ENCODE measurements at regions of chr14 and their contacts with region 1.

Region 1: DNA sequence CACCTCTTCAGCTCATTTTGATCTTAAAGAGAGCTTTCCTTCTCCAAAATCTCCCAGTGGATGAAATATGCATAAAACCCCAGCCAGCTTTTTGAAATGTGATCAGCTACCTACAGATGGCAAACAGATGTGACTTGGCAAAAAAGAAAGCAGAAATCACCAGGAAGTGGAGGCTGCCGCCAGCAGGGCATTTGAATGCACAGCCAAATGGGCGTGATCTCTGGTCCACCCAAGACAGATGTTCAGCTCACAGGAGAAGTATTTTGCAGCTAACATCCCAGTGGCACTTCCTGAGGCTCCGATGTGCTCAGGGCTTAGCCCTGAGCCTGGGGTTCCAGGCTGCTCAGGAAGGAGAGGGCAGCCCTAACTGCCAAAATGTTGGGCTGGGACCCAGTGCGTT is 78.3 kb downstream of the LGMN start:
- DNase-seq: no peak
- CTCF ChIP-seq: no peak

Region 2: DNA sequence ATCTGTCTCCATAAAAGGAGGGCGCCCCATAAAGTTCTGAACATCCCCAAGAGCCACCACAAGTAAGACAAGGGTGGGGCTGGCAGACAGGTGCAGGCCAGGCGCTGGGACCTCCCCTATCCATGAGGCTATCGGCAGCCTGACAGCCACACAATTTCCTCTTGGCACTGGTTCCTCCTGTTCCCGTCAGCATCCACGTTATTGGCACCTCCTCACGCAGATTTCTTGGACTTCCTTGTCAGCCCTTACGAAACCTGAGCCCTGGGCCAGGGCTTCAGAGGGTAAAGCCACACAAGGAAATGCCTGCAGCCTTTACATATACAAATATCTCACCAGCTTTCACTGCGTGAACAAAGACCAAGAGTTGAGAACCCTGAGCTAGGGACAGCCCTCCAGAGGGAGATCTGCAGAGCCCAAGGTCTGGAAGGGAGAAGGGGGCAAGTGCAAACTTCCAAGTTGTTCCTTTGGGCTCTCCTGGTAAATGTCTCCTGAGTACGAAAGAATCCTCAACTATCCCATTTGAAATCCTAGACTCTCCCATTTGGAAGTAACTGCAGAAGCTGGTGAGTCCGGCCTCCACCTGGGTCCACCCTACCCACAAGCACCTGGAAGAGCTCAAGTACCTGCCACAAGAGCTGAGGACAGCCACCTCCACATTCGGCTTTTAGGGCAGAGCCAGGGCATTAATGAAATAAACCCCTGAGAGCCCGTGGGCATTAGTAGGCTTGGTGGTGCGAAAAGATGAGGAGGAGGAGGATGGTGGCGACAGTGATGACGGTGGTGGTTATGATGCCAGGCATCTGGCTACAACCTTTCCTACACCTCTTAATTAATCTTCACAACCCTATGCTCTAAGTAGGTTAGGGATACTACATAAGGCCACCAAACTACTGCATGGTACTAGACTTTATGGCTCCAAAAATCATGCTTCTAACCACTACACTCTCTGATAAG is 797.4 kb before region 1 on chr14:
- in situ Hi-C with region 1: no loop called
- DNase-seq: no peak
- CTCF ChIP-seq: no peak

Region 3: DNA sequence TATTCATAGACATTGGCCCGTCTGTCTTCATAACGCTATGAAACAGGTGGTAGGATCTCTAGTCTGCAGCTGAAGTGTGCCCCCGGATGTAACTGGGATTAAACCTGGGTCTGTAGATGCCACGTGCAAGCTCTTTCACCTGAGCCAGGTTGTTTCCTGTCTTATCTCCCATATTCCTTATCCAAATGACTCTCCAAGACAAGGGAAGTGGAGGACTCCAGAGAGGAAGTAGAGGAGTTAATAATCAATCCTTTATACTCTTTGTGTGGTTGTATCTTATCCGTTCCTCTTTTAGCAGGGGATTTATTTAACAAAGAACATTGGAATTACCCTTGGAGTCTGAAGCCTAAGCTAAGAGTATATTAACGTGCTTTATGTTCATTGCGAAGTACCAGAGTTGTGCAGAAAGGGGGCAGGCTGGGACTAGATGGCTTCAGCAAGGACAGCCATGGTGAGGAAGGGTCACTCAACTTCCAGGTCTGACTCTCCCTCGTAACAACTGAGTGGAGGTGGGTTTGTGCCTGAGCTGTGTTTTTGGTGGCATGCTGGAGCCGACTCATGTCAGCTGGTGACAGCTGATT is 73.7 kb before region 1 on chr14:
- in situ Hi-C with region 1: loop called (anchors 5 kb)
- DNase-seq: no peak
- CTCF ChIP-seq: no peak

Region 4: DNA sequence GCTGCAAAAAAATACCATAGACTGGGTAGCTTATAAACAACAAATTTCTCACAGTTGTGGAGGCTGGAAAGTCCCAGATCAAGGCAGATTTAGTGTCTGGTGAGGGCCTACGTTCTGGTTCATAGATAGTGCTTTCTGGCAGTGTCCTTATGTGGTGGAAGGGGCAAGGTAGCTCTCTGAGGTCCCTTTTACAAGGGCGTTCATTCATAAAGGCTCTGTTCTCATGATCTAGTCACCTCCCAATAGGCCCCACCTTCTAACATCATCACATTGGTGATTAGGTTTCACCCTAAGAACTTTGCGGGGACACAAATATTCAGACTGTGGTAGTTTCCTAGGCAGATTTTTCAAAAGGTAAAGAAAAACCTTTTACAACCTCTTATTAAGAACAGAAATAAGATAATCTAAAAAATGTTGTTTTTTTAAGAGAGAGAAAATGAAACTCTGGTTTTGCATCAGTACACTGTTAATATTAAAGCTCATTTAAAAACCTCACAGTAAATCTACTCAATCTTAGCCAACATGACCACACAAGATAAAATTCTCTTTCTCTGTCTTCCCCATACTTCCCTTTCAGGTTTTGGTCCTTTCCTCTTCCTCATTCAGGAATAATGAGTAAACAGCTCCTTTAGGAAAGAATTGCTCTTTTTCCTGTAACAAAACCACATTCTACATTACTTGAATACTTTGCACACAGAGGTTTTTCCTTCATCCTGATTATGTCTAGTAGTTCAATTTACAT is 878.1 kb after region 1 on chr14:
- in situ Hi-C with region 1: no loop called
- DNase-seq: peak; percentile 30
- CTCF ChIP-seq: no peak

Measured in GM13976 (cell line).